A673 (cell line): ENCODE measurements at regions of chr1 and their contacts with region 1.

Region 1: DNA sequence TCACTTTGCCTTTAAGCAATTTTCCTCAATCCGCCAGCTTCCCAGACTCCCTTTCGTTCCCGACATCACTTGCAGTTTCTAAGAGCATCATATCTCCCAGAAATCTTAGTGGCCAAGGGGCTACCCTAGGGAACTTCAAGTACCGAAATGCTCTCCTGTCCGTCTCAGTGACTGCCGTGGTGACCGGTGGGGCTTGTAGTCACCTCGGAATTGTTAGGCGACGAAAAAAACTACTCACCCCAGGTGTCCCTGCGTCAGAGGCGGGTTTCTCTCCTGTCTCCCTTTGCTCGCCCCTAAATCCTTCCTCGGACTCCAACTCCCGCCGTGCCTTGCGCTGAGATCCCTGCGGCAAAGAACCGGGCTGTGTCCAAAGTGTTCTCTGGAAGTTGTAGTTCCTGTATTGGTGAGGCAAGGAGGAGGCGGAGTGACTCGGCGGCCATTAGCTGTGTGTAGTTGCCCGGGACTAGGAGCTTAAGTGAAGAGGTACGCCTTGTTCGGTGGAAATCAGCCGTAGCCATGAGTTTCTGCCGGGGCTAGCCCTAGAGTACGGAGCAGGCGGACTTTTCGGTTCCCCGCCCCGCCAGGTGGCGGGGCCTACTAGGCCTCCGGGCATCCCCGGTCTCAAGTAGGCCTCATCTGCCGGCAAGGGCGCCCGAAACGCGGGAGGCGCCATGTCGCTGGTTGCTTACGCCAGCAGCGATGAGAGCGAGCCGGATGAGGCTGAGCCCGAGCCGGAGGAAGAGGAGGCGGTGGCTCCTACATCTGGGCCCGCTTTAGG is at the start of gene PRCC:
- DNase-seq: peak; percentile 100
- H3K4me3 ChIP-seq: peak within 1 kb of the TSS; percentile 89
- H3K27ac ChIP-seq: peak within 1 kb of the TSS; percentile 94
- H3K4me1 ChIP-seq: peaks cover 14% of the 10 kb centered on the region
- H3K27me3 ChIP-seq: no peaks in the 10 kb centered on the region
- CTCF ChIP-seq: no peak
- total RNA-seq, gene PRCC: 121 and 125 TPM in 2 replicates

Region 2: GRCh38 chr1:156581661-156582387 is 185.5 kb before region 1 on chr1:
- CTCF ChIA-PET with region 1: no interaction called
- POLR2A ChIA-PET with region 1: no interaction called
- intact Hi-C with region 1: no loop called
- DNase-seq: no peak
- H3K4me3 ChIP-seq: no peak overlapping the region
- H3K27ac ChIP-seq: no peak overlapping the region
- H3K4me1 ChIP-seq: no peaks in the 10 kb centered on the region
- H3K27me3 ChIP-seq: no peaks in the 10 kb centered on the region
- CTCF ChIP-seq: no peak

Region 3: DNA sequence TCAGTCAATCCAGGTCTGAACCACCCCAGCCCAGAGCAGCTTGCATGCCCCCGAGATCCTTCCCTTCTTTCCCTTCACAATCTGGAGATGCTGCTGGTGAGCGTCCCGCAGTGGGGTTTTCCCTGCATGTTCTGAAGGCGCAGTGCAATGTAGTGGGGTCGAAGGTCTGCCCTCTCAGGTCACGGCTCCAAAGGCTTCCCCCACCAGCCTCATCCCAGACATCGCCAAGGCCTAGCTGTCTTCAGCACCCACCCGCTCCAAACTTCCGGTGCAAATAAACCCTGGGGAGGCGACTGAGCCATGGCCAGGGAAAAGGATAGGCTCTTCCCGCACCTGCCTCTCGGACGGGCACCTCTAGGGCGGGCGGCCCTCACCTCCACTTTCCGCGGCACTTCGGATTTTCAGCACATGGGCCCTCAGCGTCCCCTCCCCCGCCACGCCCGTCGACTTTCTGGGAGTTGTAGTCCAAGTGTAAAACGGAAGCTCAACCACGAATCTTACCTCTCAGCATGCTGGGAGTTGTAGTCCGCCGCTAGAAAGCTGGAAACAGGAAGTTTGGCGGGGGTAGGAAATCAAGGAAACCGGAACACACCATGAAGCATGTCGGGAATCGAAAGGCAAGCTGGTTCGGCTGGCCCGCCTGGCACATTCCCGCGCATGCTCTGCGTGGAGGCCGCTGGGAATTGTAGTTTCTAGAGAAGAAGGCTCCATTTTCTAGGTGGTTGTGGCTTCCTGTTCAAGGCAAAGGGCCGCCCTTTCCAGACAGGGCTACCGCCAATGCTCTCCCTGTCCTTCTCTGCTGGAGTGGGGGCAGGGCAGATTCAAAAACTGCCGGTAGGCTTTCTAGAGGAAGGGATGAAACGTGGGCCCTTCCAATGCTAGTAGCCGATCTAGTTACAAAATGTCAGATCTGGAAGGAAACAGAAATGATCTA is 26.3 kb before region 1 on chr1 and contains the start of gene MRPL24:
- CTCF ChIA-PET with region 1: interaction called, 4 read pairs
- POLR2A ChIA-PET with region 1: no interaction called
- intact Hi-C with region 1: loop called (anchors 1 kb)
- DNase-seq: peak; percentile 100
- H3K4me3 ChIP-seq: peak within 1 kb of the TSS; percentile 65
- H3K27ac ChIP-seq: peak within 1 kb of the TSS; percentile 77
- H3K4me1 ChIP-seq: peaks cover 14% of the 10 kb centered on the region
- H3K27me3 ChIP-seq: no peaks in the 10 kb centered on the region
- CTCF ChIP-seq: no peak
- total RNA-seq, gene MRPL24: 85.7 and 92.9 TPM in 2 replicates

Region 4: GRCh38 chr1:156751758-156752757 is 15.2 kb before region 1 on chr1:
- CTCF ChIA-PET with region 1: interaction called, 4 read pairs
- POLR2A ChIA-PET with region 1: interaction called, 3 read pairs
- intact Hi-C with region 1: loop called (anchors 2 kb)
- DNase-seq: peak; percentile 99
- H3K4me3 ChIP-seq: peak overlapping the region; percentile 92
- H3K27ac ChIP-seq: peak overlapping the region; percentile 98
- H3K4me1 ChIP-seq: peaks cover 28% of the 10 kb centered on the region
- H3K27me3 ChIP-seq: no peaks in the 10 kb centered on the region
- CTCF ChIP-seq: no peak